ENCODE measurements at regions of chr1 and their contacts with region 1.

Region 1: DNA sequence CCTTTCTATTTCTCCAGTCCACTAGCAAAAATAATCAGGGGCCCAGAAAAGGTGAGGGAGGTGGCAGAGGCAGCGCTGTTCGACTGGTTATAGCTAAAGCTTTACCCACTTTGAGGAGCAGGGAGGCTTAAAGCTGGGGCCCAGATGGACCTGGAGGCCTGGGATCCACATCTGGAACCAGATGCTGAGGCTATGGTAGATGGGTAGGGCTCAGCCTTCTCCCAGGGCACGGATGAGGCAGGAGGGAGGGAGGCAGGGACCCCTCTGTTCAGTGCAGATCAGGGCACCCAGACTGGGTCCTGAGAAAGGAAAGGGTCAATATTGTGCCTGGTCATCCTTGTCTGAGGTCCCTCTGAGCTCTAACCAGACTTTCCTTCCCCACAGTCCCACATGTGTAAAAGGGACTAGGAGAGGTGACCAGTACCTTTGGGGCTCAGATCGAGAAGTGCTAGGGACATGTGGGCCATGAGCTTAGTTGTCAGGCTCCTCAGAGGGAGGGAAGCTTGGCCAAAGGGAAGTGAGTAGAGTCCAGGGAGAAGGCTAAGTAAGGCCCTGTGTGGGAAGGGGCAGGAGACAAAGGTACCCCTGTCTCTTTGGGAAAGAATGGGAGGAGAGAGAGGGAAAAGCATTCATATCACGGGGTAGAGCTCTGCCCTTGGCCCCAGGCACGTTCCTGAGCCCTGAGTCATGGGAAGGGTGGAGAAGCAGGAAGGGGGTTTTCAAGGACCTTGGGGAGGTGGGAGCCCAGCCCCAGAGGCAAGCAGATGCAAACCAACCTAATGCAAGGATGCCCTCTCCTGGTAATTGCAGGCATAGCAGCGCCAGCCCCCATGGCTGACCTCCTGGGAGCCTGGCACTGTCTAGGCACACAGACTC is 15.4 kb downstream of the LMNA start:
- DNase-seq: peak; percentile 80
- H3K4me3 ChIP-seq: peak overlapping the region; percentile 26
- CTCF ChIP-seq: peak; percentile 96

Region 2: DNA sequence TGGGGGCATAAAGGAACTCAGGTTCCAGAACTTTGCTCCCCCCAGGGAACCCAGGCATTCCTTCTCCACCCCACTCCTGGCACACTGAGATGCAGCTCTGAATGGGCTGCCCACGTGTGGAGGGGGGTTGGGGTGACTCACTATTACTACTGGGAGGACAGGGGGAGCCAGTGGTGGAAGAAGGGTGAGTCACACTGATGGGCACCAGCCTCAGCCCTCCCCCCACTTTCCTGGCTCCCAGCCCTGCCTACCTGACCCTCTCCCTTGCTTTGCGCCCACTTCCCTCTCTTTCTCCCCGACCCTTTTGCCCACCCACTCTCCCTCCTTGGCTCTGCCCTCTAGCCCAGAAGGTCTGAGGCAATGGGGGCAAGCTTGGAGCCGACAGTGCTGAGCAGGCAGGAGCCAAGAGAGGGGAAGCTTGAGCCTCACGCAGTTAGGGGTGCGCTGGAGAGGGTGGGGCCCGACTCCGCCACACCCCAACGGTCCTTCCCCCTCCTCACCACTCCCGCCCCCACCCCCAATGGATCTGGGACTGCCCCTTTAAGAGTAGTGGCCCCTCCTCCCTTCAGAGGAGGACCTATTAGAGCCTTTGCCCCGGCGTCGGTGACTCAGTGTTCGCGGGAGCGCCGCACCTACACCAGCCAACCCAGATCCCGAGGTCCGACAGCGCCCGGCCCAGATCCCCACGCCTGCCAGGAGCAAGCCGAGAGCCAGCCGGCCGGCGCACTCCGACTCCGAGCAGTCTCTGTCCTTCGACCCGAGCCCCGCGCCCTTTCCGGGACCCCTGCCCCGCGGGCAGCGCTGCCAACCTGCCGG is 15.6 kb before region 1 on chr1 and contains the start of gene LMNA:
- CTCF ChIA-PET with region 1: interaction called, 1,837 read pairs
- POLR2A ChIA-PET with region 1: interaction called, 216 read pairs
- DNase-seq: peak; percentile 78
- H3K4me3 ChIP-seq: peak within 1 kb of the TSS; percentile 100
- CTCF ChIP-seq: no peak

Region 3: GRCh38 chr1:156146020-156146768 is 16.2 kb after region 1 on chr1:
- CTCF ChIA-PET with region 1: interaction called, 115 read pairs
- POLR2A ChIA-PET with region 1: no interaction called
- DNase-seq: peak; percentile 85
- H3K4me3 ChIP-seq: no peak overlapping the region
- CTCF ChIP-seq: peak; percentile 53

Region 4: DNA sequence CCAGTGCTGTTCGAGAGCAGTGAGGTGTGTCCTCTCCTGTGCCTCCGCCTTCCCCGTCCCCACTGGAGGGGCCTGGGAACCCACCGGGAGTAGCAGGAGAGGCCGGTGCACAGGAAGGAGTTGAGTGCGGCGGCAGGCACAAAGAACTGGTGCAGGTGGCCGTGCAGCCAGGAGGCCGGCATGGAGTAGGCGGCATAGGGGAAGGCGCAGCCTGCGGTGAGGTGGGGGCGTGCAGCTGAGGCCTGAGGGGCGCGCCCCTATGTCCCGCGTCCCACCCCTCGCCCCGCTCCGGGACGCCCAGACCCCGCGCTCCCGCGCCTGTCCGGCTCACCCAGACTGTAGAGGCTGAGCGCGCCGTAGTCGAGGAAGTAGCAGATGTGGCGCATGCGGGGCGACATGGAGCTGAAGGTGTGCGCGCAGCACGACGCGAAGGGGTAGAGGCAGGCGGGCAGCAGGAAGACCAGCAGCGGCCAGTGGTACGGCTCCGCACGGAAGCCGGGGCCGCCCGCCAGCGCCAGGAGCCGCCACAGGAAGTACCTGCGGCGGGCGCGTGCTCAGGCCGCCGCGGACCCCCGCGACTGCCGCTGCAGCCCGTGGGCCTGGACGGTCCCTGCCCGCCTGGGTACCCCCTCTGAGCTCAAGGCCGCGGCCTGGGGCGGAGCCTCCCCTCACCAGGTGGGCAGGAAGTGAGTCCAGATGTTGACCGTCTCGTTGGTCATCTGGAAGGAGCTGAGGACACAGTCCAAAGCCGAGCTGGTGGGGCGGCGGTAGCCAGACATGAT is 115.7 kb after region 1 on chr1:
- CTCF ChIA-PET with region 1: no interaction called
- POLR2A ChIA-PET with region 1: no interaction called
- DNase-seq: no peak
- H3K4me3 ChIP-seq: peak overlapping the region; percentile 40
- CTCF ChIP-seq: no peak

Region 5: DNA sequence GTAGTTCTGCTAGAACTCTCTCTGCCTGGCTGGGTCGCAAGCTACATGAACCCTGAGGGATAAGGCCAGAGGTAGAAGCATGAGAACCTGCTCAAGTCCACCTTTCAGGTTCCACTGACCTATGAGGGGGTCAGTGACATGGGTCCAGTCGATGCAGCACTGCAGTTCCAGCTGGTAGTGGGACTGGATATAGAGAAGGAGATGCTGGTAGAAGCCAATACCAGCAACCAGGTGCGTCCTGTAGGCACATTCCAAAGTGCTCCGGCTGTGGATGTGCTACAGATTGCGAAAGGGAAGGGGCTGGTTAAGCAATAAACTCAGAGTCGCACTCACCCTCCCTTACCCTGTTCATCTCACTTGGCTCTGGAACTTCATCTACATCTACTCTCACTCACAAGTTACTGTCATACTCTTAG is 147.0 kb after region 1 on chr1:
- CTCF ChIA-PET with region 1: no interaction called
- POLR2A ChIA-PET with region 1: no interaction called
- DNase-seq: no peak
- H3K4me3 ChIP-seq: no peak overlapping the region
- CTCF ChIP-seq: no peak